ENCODE measurements at regions of chr20 and their contacts with region 1.

Region 1: GRCh38 chr20:6075428-6076219 is 21.8 kb upstream of the LRRN4 start:
- DNase-seq: peak in 24 of 42 donors; percentile 14 to 69 (median 36)

Region 2: GRCh38 chr20:5529331-5530148 is 546.1 kb before region 1 on chr20:
- intact Hi-C with region 1: loop called (anchors 5 kb)
- DNase-seq: peak; percentile 80 to 95 (median 89)

Region 3: GRCh38 chr20:5950271-5951031 is 125.2 kb before region 1 on chr20 and contains the starts of genes MCM8 and TRMT6:
- intact Hi-C with region 1: loop called (anchors 5 kb)
- DNase-seq: peak; percentile 91 to 98 (median 95)